ENCODE measurements at regions of chr12 and their contacts with region 1.

Region 1: DNA sequence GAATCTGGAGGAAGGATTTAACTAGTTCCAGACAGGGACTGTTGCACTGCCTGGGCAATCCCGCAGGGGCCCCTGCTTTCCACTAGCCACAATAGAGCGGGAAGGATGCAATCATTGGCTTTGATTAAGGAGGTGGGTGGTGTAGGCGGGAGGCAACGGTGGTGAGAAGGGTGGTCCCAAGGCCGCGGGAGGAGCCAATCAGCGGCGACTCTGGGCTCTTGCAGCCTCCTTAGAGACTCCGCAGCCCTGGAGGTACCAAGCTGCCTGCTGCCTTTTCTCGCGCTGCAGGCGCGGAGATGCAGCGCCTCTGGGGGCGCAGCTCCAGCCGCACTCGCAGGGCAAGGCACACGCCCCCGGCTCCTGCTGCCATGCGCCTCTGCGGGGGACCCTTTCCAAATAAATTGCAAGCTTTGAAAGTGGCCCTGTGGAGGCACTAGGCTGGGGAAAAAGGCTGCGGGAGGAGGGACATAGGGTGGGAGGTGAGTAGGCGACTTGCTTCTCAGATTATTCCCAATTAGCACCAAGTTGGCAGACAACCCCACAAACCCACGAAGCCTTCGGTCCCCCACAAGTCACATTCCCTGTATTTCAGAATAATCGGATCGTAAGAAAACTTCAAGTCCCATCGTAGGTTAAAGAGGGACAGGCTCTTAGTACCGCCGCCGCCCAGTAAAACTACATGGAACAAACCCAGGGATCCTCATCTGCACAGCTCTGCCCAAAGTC is 858 bp upstream of the KCNA1 start:
- DNase-seq: no peak
- H3K4me3 ChIP-seq: peak overlapping the region; percentile 46 to 80 (median 60)
- H3K27ac ChIP-seq: no peak overlapping the region
- H3K4me1 ChIP-seq: peaks cover 4% of the 10 kb centered on the region in 2 donors
- H3K27me3 ChIP-seq: peaks cover 0 to 53% of the 10 kb centered on the region in 2 donors
- CTCF ChIP-seq: no peak
- POLR2A ChIP-seq: no peak

Region 2: GRCh38 chr12:4932576-4932975 is 23.7 kb after region 1 on chr12:
- intact Hi-C with region 1: no loop called
- DNase-seq: no peak
- H3K4me3 ChIP-seq: no peak overlapping the region
- H3K27ac ChIP-seq: no peak overlapping the region
- H3K4me1 ChIP-seq: no peaks in the 10 kb centered on the region
- H3K27me3 ChIP-seq: no peaks in the 10 kb centered on the region
- CTCF ChIP-seq: no peak
- POLR2A ChIP-seq: no peak

Region 3: DNA sequence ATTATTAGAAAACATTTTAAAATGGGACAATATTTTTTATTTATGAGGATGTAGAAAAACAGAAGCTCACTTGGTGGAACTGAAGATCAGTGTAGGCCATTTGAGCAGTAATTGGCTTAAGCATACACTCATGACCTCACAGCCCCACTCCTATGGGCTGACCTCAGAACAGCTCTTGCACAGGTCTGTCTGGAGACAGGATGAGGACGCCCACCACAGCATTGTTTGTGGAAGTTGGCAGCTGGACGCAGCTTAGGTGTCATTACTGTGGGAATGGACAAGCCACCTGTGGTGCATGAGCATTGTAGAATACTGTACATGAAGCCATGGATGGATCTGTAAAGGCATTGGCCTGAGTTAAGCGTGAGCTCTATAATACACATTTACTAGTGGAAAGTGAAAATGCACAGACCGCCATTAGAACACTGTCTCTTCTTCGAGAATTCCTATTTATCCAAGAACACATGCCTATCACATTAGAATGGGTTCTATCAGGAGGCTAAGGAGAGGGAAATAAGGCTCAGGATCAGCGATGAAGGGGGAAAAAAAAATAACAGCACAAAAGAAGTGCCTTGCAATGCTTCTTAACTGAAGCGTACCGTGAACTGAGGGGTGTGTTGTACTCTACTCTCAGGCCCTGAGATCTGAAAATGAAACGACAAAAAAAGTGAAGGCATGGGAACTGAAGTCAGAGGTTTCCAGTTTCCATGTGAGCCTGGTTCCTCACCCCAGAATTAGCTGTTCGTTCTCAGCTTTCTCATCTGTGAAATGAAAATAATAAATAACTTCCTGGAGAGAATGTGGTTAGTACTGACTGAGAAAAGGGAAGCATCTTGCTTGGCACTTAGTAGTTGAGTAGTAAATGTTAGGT is 34.5 kb after region 1 on chr12:
- intact Hi-C with region 1: loop called (anchors 1 kb)
- DNase-seq: no peak
- H3K4me3 ChIP-seq: no peak overlapping the region
- H3K27ac ChIP-seq: no peak overlapping the region
- H3K4me1 ChIP-seq: no peaks in the 10 kb centered on the region
- H3K27me3 ChIP-seq: no peaks in the 10 kb centered on the region
- CTCF ChIP-seq: no peak
- POLR2A ChIP-seq: no peak